B cell (primary cell): ENCODE measurements at regions of chr2 and their contacts with region 1.

Region 1: DNA sequence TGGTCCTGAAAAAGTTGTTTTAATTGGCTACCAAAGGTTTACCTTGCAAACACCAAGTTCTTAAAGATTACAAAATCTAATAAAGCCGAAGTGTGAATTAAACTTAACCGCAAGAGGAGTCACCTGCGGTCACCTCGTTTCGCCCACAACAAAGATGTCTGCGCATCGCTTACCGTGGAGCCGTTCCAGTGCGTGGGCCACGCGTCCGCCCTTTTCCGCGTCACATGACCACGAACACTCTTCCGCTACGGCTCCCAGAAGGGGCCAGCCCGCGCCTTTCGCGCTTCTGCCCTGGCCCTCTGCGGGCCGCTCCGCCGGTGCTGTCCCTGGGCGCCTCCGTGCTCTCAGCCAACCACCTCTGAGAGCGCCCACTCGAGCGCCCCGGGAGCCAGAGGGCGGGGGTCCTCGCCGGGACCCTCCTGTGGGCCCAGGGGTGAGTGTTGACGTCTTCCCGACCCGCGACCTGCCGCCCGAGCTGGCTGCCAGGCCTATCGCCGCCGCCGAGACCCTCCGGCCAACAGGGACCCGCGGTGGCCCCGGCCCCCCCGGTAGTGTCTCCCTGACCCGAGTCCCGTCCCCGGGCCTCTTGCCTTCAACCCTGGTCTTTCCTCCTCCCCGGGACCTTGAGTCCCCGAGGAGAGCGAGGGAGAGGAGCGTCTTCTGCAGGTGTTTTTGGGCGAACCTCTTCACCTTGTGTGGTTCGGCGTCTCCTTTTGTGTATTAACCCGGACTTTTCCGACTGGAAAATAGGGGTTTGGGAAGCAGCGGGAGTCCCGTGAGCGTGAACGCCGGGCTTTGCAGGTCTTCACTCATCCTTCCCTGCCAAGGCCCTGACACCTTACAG is at the start of gene MFF:
- DNase-seq: peak; percentile 95
- ATAC-seq: peak; percentile 98
- H3K4me3 ChIP-seq: peak within 1 kb of the TSS; percentile 78 to 88 (median 80)
- H3K4me3 Mint-ChIP-seq: peak within 1 kb of the TSS; percentile 96
- H3K27ac ChIP-seq: peak within 1 kb of the TSS; percentile 72 to 89
- H3K27ac Mint-ChIP-seq: peak within 1 kb of the TSS; percentile 95
- H3K4me1 ChIP-seq: peaks cover 20 to 23% of the 10 kb centered on the region in 2 donors
- H3K4me1 Mint-ChIP-seq: peaks cover 33% of the 10 kb centered on the region
- H3K27me3 ChIP-seq: no peaks in the 10 kb centered on the region
- H3K27me3 Mint-ChIP-seq: no peaks in the 10 kb centered on the region
- CTCF ChIP-seq: peak; percentile 43
- total RNA-seq, gene MFF: 70.4 and 75.2 TPM in 2 replicates

Region 2: DNA sequence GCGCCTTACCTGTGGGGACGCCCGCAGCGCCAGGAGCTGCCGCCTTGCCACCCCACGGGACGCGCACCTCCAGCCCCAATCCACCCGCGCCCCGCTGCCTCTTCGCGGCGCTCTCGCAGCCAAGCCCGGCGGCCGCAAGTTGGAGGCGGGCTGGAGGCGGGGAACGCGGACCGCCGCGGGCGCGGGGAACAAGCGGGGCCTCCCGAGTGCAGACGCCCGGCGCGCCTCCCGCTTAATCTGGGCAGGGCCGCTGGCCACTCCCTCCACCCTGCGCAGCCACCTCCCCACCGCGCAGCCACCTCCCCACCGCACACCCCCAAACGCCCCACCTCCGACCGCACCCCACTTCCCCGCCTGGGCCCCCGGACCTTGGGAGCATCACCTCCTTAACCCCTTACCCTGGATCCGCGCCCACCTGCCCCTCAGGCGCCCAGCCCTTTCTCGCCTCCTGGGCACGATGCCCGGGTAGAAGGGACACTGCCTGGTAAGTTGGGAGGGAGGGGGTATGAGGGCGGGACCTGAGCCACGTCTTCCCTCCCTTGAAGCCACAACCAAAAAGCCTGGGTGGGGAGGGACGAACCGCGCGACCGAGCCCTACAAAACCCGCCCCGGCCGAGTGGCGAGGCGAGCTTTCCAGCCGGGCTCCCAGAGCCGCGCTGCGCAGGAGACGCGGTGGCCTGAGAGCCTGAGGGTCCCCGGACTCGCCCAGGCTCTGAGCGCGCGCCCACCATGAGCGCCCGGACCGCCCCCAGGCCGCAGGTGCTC is 161.0 kb before region 1 on chr2 and contains the starts of genes COL4A3 and COL4A4:
- CTCF ChIA-PET with region 1: no interaction called
- POLR2A ChIA-PET with region 1: no interaction called
- intact Hi-C with region 1: loop called (anchors 5 kb)
- DNase-seq: peak; percentile 72
- ATAC-seq: peak; percentile 82
- H3K4me3 ChIP-seq: peak within 1 kb of the TSS in 4 of 5 experiments; percentile 48 to 71 (median 60)
- H3K4me3 Mint-ChIP-seq: peak within 1 kb of the TSS; percentile 93
- H3K27ac ChIP-seq: peak within 1 kb of the TSS; percentile 52 to 62
- H3K27ac Mint-ChIP-seq: peak within 1 kb of the TSS; percentile 93
- H3K4me1 ChIP-seq: peaks cover 8 to 22% of the 10 kb centered on the region in 2 donors
- H3K4me1 Mint-ChIP-seq: peaks cover 38% of the 10 kb centered on the region
- H3K27me3 ChIP-seq: peaks cover 0 to 5% (median 0%) of the 10 kb centered on the region in 4 experiments
- H3K27me3 Mint-ChIP-seq: peaks cover 3% of the 10 kb centered on the region
- CTCF ChIP-seq: no peak
- total RNA-seq, gene COL4A3: 43.9 and 45.9 TPM in 2 replicates
- total RNA-seq, gene COL4A4: 30.2 and 34.6 TPM in 2 replicates

Region 3: DNA sequence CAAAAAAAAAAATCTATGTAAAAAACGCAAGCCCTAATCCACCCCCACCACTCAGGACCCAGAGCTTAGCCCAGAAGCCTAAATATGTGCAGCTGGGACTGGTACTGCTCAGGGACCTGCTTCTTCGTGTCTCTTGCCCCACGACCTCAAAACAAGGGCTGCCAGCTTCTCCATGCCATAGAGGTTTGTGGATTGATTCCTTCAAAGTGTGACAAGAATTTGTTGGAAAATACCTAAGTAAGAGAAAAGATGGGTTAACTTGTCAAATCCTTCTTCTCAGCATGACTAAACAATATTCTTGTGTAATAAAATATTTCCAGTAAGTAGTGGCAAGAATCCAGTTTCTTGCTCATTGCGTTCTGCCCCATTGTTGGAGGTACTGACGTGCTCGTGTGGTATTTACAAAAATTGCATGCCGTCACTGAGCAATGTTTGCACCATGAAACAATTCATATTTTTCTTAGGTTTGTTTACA is 63.4 kb after region 1 on chr2:
- CTCF ChIA-PET with region 1: no interaction called
- POLR2A ChIA-PET with region 1: interaction called, 3 read pairs
- intact Hi-C with region 1: loop called (anchors 10 kb)
- DNase-seq: no peak
- ATAC-seq: no peak
- H3K4me3 ChIP-seq: no peak overlapping the region
- H3K4me3 Mint-ChIP-seq: no peak overlapping the region
- H3K27ac ChIP-seq: no peak overlapping the region
- H3K27ac Mint-ChIP-seq: peak overlapping the region; percentile 63
- H3K4me1 ChIP-seq: peaks cover 29 to 39% of the 10 kb centered on the region in 2 donors
- H3K4me1 Mint-ChIP-seq: peaks cover 42% of the 10 kb centered on the region
- H3K27me3 ChIP-seq: no peaks in the 10 kb centered on the region
- H3K27me3 Mint-ChIP-seq: no peaks in the 10 kb centered on the region
- CTCF ChIP-seq: no peak

Region 4: DNA sequence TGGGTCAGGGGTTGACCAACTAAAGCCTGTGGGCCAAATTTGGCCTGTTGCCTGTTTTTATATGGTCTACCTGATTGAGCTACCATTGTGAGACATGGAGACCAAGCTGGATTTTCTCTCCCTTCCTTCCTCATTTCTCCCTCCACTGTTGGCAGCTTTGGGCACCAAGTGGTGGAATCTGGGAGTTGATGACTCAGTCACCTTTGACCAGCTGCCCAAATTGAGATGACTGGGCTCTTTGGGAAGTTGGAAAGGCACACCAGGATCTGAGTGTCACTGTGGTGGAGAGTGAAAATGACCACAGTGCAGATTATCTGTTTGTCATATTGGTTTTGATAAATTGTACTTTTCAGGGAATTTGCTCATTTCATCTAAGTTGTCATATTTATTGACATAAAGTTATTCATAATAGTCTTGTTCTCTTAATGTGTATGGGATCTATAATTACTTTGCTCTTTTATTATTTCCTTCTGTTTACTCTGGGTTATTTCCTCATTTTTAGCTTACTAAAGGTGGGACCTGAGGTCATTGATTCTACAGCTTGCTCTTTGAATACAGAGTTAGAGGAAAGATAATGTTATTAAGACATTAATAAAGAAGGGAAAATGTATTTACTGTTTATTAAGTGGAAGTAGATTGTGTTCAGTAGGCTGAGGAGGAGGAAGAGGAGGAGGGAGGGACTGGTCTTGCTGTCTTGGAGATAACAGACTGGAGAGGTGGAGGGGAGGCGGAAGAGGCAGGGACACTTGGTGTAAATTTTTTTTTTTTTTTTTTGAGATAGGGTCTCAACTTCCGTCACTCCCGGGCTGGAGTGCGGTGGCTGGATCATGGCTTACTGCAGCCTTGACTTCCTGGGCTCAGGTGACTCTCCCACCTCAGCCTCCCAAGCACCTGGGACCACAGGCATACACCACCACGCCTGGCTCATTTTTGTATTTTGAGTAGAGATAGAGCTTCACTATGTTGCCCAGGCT is 178.5 kb after region 1 on chr2:
- CTCF ChIA-PET with region 1: no interaction called
- POLR2A ChIA-PET with region 1: no interaction called
- intact Hi-C with region 1: no loop called
- DNase-seq: no peak
- ATAC-seq: no peak
- H3K4me3 ChIP-seq: no peak overlapping the region
- H3K4me3 Mint-ChIP-seq: peak overlapping the region; percentile 12
- H3K27ac ChIP-seq: peak overlapping the region in 1 of 2 donors; percentile 0
- H3K27ac Mint-ChIP-seq: no peak overlapping the region
- H3K4me1 ChIP-seq: peaks cover 40 to 51% of the 10 kb centered on the region in 2 donors
- H3K4me1 Mint-ChIP-seq: peaks cover 57% of the 10 kb centered on the region
- H3K27me3 ChIP-seq: no peaks in the 10 kb centered on the region
- H3K27me3 Mint-ChIP-seq: no peaks in the 10 kb centered on the region
- CTCF ChIP-seq: no peak